Calu3 (cell line): ENCODE measurements at regions of chr3 and their contacts with region 1.

Region 1: DNA sequence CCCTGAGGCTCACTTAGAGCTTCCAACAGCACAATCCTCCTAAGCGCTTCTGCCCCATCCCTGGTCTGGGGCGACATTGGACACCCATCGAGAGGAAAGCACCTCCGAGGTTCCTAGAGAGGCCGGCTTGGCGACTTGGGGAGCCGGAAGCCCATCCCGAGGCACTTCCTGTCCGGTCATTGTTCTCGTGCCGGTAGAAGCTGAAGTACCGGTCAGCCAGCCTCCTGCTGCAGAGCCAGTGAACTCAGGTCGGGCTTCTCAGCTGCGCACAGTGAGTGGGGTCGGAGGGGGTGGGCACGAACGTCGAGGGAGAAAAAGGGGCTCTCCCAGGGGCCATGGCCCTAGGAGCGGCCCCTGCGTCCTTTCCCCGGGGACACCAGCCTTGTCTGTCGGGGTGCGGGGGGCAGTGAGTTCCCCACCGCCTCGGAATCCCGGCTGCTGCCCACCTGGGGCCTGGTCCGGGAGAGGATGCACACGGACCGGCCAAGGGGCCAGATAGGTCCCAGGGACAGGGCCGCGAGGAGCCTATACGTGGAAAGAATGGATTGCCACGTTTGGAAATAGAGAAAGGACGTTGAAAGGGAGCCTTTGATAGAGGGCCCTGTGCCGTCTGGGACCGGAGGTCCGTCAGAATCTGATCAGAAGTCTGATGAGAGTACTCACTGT is at the start of gene ZNF35:
- DNase-seq: peak; percentile 86
- H3K4me3 Mint-ChIP-seq: peak within 1 kb of the TSS; percentile 87
- H3K27ac Mint-ChIP-seq: peak within 1 kb of the TSS; percentile 79
- H3K4me1 Mint-ChIP-seq: no peaks in the 10 kb centered on the region
- H3K27me3 Mint-ChIP-seq: no peaks in the 10 kb centered on the region
- CTCF ChIP-seq: no peak
- total RNA-seq, gene ZNF35: 11.3 and 11.8 TPM in 2 replicates

Region 2: DNA sequence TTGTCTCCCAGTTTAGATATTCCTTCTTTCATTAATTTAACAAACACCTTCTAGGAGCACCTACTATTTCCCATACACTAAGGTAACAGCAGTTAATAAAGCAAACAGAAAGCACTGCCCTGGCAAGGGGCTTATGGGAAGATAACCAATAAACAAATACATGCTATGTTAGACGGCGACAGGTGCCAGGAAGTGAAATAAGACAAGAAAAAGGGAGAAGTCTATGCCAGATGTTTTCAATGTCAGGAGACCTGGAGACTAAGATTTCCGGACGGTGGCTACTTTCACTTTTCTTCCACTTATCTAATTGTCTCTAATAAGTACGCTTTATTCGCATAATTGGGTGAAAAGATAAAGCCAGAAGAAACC is 138.7 kb before region 1 on chr3:
- CTCF ChIA-PET with region 1: no interaction called
- intact Hi-C with region 1: loop called (anchors 5 kb)
- DNase-seq: no peak
- H3K4me3 Mint-ChIP-seq: peak overlapping the region; percentile 88
- H3K27ac Mint-ChIP-seq: peak overlapping the region; percentile 87
- H3K4me1 Mint-ChIP-seq: peaks cover 8% of the 10 kb centered on the region
- H3K27me3 Mint-ChIP-seq: no peaks in the 10 kb centered on the region
- CTCF ChIP-seq: no peak

Region 3: GRCh38 chr3:44561076-44561475 is 87.6 kb before region 1 on chr3:
- CTCF ChIA-PET with region 1: no interaction called
- intact Hi-C with region 1: no loop called
- DNase-seq: no peak
- H3K4me3 Mint-ChIP-seq: no peak overlapping the region
- H3K27ac Mint-ChIP-seq: no peak overlapping the region
- H3K4me1 Mint-ChIP-seq: no peaks in the 10 kb centered on the region
- H3K27me3 Mint-ChIP-seq: no peaks in the 10 kb centered on the region
- CTCF ChIP-seq: no peak

Region 4: DNA sequence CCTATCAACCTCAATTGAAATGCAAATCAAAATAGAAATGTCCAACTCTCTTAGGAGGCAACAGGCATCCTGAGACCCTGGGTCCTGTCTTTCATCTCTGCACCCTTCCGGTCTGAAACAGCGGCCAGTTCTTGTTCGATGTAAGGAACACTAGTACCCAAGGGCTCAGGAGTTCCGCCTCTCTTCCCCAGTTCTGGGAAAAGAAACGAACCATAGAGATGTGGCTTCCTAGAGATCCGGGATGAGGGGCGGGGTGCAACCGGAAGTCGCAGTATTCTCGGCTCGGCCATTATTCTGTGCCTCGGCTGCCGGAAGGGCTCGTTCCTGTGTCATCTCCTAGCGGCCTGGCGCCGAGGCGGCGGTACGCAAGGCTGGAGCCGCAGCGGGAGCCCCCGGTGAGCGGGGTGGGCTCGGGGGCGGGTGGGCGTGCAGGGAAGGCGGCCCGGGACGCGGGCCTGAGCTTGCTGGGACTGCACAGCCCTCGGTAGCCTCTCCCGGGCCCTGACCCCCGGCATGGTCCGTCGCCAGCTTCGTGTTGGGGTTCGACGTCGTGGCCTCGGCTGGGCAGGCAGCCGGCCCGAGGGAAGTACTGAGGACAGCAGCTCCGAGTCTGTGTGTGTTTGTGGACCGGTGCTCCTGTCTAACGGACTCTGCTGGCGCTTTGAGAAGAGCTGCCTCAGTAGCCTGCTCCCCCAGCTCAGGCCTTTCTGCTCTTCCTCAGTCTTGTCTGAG is 23.8 kb before region 1 on chr3 and contains the start of gene ZNF197:
- CTCF ChIA-PET with region 1: no interaction called
- intact Hi-C with region 1: loop called (anchors 2 kb)
- DNase-seq: peak; percentile 80
- H3K4me3 Mint-ChIP-seq: peak within 1 kb of the TSS; percentile 73
- H3K27ac Mint-ChIP-seq: peak within 1 kb of the TSS; percentile 60
- H3K4me1 Mint-ChIP-seq: no peaks in the 10 kb centered on the region
- H3K27me3 Mint-ChIP-seq: no peaks in the 10 kb centered on the region
- CTCF ChIP-seq: no peak
- total RNA-seq, gene ZNF197: 12.0 and 14.0 TPM in 2 replicates